Posterior vena cava (tissue), 2 donors: ENCODE measurements at regions of chr11 and their contacts with region 1.

Region 1: GRCh38 chr11:76734456-76735420 is 48.4 kb upstream of the TSKU start:
- DNase-seq: no peak

Region 2: GRCh38 chr11:76654298-76654851 is 80.4 kb before region 1 on chr11:
- intact Hi-C with region 1: no loop called
- DNase-seq: peak; percentile 90

Region 3: GRCh38 chr11:76788661-76789439 is 54.1 kb after region 1 on chr11:
- intact Hi-C with region 1: loop called in 1 of 2 experiments (anchors 5 kb)
- DNase-seq: peak; percentile 76

Region 4: DNA sequence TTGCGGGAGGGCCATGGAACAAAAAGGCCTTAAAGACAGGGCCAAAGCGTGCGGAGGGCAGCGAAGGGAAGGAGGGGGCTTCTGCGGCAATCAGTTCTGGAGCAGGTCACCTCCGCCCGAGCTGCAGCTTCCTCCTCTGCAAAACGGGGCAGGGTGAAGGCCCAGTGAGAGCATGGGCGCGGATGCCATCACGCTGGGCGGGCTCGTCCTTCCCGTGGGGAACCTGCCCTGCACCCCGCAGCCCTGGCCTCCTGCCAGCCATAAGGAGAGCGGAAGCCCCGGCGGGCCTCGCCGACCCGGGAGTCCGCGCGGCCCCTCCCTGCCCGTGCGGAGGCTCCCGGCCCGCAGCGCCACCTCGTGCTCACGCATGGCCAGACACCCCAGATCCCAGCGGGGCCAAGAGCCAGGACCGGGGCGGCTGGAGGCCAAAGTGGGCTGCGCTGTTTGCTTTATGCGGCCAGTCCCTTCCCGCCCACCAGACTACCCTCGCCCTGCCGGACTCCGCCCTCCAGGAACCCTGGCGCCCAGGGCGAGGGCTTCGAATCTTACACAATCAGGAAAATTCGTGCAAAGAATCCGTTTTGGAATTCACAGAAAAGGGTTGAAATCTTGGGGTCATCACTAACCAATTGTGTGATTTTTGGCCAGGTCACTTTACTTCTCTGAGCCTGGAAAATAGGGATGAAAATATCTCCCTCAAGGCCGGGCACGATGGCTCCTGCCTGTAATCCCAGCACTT is 64.5 kb after region 1 on chr11:
- intact Hi-C with region 1: loop called (anchors 2 to 5 kb)
- DNase-seq: peak; percentile 97

Region 5: GRCh38 chr11:76807206-76807875 is 72.6 kb after region 1 on chr11:
- intact Hi-C with region 1: loop called in 1 of 2 experiments (anchors 5 kb)
- DNase-seq: peak; percentile 97

Region 6: DNA sequence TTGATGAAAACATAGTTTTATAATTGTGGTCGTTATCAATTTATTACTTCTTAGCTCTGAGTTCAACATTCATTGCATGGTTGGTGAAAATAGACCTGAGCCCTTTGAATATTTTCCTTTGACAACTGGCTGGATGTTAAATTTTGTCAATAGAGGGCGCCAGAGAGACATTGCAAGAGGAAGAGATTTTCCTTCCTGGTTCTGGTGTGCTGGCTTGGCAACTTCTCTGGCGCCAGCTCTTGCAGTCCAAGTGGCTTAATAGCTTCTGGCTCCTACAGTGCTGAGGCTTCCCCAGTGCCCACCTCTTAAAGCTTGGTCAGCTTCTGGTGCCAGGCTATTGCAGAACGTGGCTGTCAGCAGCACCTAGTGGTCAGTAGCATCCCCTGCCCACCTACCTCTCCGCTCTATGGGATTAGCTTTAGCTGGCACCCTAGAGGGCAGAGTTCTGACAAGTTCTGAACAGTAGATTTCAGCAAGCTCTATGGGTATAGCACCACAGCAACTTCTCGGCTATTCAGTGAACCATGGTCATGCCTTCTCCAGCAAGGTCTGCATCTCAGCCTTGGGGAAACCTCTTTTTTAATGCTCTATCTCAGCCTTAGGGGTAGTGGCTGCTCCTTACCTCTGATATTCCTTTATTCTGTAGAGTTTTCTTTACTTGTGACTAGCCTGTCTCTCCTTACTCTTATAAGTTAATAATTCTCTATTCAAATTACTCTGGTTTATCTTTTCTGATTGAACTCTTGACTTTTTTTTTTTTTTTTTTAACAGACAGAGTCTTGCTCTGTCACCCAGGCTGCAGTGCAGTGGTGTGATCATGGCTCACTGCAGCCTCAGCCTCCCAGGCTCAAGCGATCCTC is 185.4 kb after region 1 on chr11:
- intact Hi-C with region 1: loop called (anchors 5 to 10 kb)
- DNase-seq: peak; percentile 91